ENCODE measurements at regions of chr4 and their contacts with region 1.

Region 1: GRCh38 chr4:185020293-185020808 is 2.1 kb downstream of the HELT start:
- DNase-seq: no peak
- H3K4me3 ChIP-seq: no peak overlapping the region
- H3K27ac ChIP-seq: no peak overlapping the region
- H3K4me1 ChIP-seq: no peaks in the 10 kb centered on the region
- H3K27me3 ChIP-seq: peaks cover 80 to 93% of the 10 kb centered on the region in 2 experiments
- CTCF ChIP-seq: no peak
- POLR2A ChIP-seq: no peak

Region 2: GRCh38 chr4:184279496-184280061 is 740.8 kb before region 1 on chr4:
- CTCF ChIA-PET with region 1: no interaction called
- POLR2A ChIA-PET with region 1: interaction called, 11 read pairs
- dilution Hi-C with region 1: no loop called
- intact Hi-C with region 1: no loop called
- DNase-seq: no peak
- H3K4me3 ChIP-seq: no peak overlapping the region
- H3K27ac ChIP-seq: no peak overlapping the region
- H3K4me1 ChIP-seq: no peaks in the 10 kb centered on the region
- H3K27me3 ChIP-seq: no peaks in the 10 kb centered on the region
- CTCF ChIP-seq: no peak
- POLR2A ChIP-seq: no peak

Region 3: DNA sequence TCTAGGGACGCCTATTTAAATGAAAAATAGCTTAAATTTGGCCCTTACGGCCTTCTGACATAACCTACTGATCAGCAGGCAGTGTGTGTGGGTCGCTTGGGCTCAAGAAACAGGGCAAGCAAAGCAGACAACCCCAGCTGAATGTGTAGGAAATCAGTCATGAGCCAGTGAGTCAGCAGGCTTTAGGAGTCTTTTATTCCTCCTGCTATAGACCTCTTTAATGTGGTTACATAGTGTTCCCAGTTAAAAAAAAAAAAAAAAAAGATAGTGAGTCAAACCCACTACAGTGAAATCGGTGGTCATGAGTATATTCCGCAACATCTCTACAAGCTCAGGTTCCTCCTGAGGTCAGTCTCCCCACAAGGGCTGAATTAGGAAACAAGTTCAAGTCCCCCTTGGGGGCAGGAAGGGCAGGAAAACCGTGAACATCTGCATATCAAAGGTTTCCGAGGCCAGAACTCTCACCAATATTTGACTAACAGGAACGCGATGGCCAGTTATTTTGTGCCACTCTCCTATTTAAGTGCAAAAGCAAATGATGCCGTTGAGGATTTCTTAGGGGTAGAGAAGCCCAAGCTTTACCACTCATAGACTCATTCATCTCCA is 227.3 kb before region 1 on chr4:
- CTCF ChIA-PET with region 1: no interaction called
- POLR2A ChIA-PET with region 1: no interaction called
- dilution Hi-C with region 1: no loop called
- intact Hi-C with region 1: no loop called
- DNase-seq: peak; percentile 76
- H3K4me3 ChIP-seq: no peak overlapping the region
- H3K27ac ChIP-seq: peak overlapping the region; percentile 66
- H3K4me1 ChIP-seq: peaks cover 15% of the 10 kb centered on the region
- H3K27me3 ChIP-seq: no peaks in the 10 kb centered on the region
- CTCF ChIP-seq: no peak
- POLR2A ChIP-seq: no peak

Region 4: GRCh38 chr4:185054876-185055275 is 34.5 kb after region 1 on chr4:
- CTCF ChIA-PET with region 1: no interaction called
- POLR2A ChIA-PET with region 1: no interaction called
- dilution Hi-C with region 1: no loop called
- intact Hi-C with region 1: no loop called
- DNase-seq: no peak
- H3K4me3 ChIP-seq: no peak overlapping the region
- H3K27ac ChIP-seq: no peak overlapping the region
- H3K4me1 ChIP-seq: no peaks in the 10 kb centered on the region
- H3K27me3 ChIP-seq: peaks cover 0 to 5% of the 10 kb centered on the region in 2 experiments
- CTCF ChIP-seq: no peak
- POLR2A ChIP-seq: no peak

Measured in endothelial cell of umbilical vein (primary cell).